Naive thymus-derived CD4-positive, alpha-beta T cell (primary cell): ENCODE measurements at regions of chr3 and their contacts with region 1.

Region 1: DNA sequence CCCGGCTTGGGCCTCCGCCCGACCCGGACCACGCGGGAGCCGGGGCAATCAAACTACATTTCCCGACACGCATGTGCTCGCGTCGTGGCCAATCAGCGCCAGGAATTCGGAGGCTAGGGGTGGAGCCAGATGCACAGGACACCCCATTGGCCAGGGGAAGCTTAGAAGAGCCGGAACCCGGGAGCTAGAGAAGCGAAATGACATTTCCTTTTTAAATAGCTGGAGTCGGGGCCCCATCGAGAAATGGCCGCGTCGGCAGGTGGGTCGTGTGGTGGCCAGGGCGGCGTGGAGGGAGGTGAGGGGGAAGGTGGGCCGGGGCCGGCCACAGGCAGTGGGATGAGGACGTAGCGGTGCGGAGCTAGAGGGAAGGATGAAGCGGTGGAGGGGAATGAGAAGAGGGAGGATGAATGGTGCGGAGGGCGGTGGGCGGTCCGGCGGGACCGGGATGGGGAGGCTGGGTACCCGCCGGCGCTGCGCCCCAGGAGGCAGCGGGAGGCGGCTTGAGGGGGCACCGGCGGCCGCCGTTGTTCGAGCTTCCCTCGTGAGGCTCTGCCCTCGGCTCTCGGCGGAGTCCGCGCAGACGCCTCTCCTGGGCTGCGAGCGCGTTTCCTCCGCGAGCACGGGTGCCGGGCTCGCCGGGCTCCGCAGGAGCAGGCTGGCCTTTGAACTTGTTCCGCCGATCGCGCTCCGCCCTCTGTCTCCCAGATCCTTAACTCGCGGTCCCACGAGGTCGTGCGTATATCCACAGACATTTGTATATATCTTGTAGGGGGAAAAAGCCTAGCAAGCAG is at the start of gene KBTBD8:
- DNase-seq: peak; percentile 87 to 99 (median 98)
- ATAC-seq: peak; percentile 97
- H3K4me3 ChIP-seq: peak within 1 kb of the TSS; percentile 69
- H3K4me3 Mint-ChIP-seq: peak within 1 kb of the TSS; percentile 85 to 99 (median 96)
- H3K27ac ChIP-seq: peak within 1 kb of the TSS; percentile 75
- H3K27ac Mint-ChIP-seq: peak within 1 kb of the TSS; percentile 68 to 96 (median 93)
- H3K4me1 ChIP-seq: peaks cover 7 to 19% of the 10 kb centered on the region in 2 donors
- H3K4me1 Mint-ChIP-seq: peaks cover 4 to 39% (median 27%) of the 10 kb centered on the region in 7 donors
- H3K27me3 ChIP-seq: no peaks in the 10 kb centered on the region
- H3K27me3 Mint-ChIP-seq: peaks cover 10 to 33% (median 27%) of the 10 kb centered on the region in 5 donors
- total RNA-seq, gene KBTBD8: 4.5 to 14.6 (median 9.5) TPM

Region 2: GRCh38 chr3:66220602-66221377 is 777.5 kb before region 1 on chr3 and contains the start of gene SLC25A26:
- CTCF ChIA-PET with region 1: no interaction called
- POLR2A ChIA-PET with region 1: interaction called, 3 read pairs
- intact Hi-C with region 1: loop called (anchors 1 kb)
- DNase-seq: peak; percentile 90 to 99 (median 97)
- ATAC-seq: peak; percentile 99
- H3K4me3 ChIP-seq: peak within 1 kb of the TSS; percentile 70
- H3K4me3 Mint-ChIP-seq: peak within 1 kb of the TSS; percentile 91 to 99 (median 96)
- H3K27ac ChIP-seq: peak within 1 kb of the TSS; percentile 90
- H3K27ac Mint-ChIP-seq: peak within 1 kb of the TSS; percentile 85 to 98 (median 95)
- H3K4me1 ChIP-seq: peaks cover 7% of the 10 kb centered on the region in 2 donors
- H3K4me1 Mint-ChIP-seq: peaks cover 15 to 55% (median 44%) of the 10 kb centered on the region in 7 donors
- H3K27me3 ChIP-seq: no peaks in the 10 kb centered on the region
- H3K27me3 Mint-ChIP-seq: peaks cover 0 to 2% (median 0%) of the 10 kb centered on the region in 5 donors
- total RNA-seq, gene SLC25A26: 14.1 to 25.5 (median 17.9) TPM

Region 3: DNA sequence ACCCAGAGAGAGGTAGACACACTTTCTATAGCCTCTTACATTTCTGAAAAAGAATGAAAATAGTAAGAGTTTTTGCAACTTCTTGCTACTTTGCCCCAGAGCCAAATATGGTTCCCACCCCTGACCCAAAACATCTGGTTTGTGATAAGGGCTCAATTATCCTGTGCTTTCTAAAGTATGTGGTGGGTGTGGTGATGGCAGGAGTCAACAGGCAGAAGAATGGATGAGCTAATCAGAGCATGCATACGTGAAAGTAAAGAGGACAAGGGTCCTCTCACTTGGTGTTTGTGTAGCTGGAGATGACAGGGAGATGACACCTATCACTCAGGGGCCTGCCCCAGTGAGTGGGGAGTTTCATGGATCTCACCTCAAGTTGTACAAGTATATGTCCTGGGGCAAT is 18.9 kb after region 1 on chr3:
- CTCF ChIA-PET with region 1: no interaction called
- POLR2A ChIA-PET with region 1: interaction called, 3 read pairs
- intact Hi-C with region 1: loop called in 1 of 2 experiments (anchors 1 kb)
- DNase-seq: no peak
- ATAC-seq: no peak
- H3K4me3 ChIP-seq: no peak overlapping the region
- H3K4me3 Mint-ChIP-seq: peak overlapping the region in 1 of 10 donors; percentile 25
- H3K27ac ChIP-seq: no peak overlapping the region
- H3K27ac Mint-ChIP-seq: peak overlapping the region in 4 of 9 donors; percentile 2 to 51 (median 34)
- H3K4me1 ChIP-seq: peaks cover 0 to 19% of the 10 kb centered on the region in 2 donors
- H3K4me1 Mint-ChIP-seq: peaks cover 13 to 27% (median 24%) of the 10 kb centered on the region in 7 donors
- H3K27me3 ChIP-seq: no peaks in the 10 kb centered on the region
- H3K27me3 Mint-ChIP-seq: no peaks in the 10 kb centered on the region

Region 4: DNA sequence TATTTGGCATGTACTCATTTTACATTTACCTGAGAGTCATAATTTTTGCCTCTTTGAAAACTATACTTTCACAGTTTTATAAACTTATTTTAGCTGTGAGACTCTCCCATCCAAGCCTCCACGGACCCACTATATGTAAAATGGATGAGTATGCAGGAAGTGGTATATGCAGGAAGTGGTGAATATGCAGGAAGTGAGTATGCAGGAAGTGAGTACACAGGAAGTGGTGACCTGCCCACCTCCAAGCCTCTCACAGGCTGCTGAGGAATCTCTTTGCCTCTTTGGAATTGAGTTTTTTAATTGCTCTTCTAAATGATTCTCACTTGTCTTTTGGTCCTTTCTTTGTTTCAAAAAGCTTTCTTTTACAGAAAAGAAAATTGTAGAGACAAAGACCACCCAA is 85.0 kb after region 1 on chr3:
- CTCF ChIA-PET with region 1: no interaction called
- POLR2A ChIA-PET with region 1: interaction called, 5 read pairs
- intact Hi-C with region 1: loop called (anchors 1 kb)
- DNase-seq: peak in 8 of 9 donors; percentile 37 to 75 (median 67)
- ATAC-seq: peak; percentile 87
- H3K4me3 ChIP-seq: peak overlapping the region; percentile 56
- H3K4me3 Mint-ChIP-seq: peak overlapping the region; percentile 54 to 91 (median 71)
- H3K27ac ChIP-seq: peak overlapping the region; percentile 61
- H3K27ac Mint-ChIP-seq: peak overlapping the region; percentile 73 to 96 (median 88)
- H3K4me1 ChIP-seq: peaks cover 19 to 22% of the 10 kb centered on the region in 2 donors
- H3K4me1 Mint-ChIP-seq: peaks cover 16 to 46% (median 27%) of the 10 kb centered on the region in 7 donors
- H3K27me3 ChIP-seq: no peaks in the 10 kb centered on the region
- H3K27me3 Mint-ChIP-seq: peaks cover 0 to 12% (median 6%) of the 10 kb centered on the region in 5 donors

Region 5: DNA sequence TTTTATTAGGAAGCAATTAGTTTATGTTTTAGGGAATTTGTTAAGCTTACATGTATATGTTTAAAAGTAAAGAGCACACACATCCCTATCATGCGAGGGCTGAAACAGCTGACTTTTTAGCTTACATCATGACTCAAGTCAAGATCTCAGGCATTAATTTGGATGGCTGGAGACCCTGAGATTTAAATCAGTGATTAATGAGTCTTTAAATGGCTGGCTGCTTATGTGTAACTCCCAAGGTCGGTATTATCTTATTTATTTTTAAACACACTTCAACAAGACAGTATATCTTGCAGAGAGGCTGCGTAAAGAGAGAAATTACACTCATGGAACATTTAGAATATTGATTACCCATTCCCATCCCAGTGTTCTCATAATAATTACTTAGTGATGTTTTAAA is 169.2 kb after region 1 on chr3:
- CTCF ChIA-PET with region 1: no interaction called
- POLR2A ChIA-PET with region 1: no interaction called
- intact Hi-C with region 1: no loop called
- DNase-seq: no peak
- ATAC-seq: no peak
- H3K4me3 ChIP-seq: no peak overlapping the region
- H3K4me3 Mint-ChIP-seq: no peak overlapping the region
- H3K27ac ChIP-seq: no peak overlapping the region
- H3K27ac Mint-ChIP-seq: no peak overlapping the region
- H3K4me1 ChIP-seq: no peaks in the 10 kb centered on the region
- H3K4me1 Mint-ChIP-seq: no peaks in the 10 kb centered on the region
- H3K27me3 ChIP-seq: no peaks in the 10 kb centered on the region
- H3K27me3 Mint-ChIP-seq: peaks cover 0 to 10% (median 3%) of the 10 kb centered on the region in 5 donors

Region 6: DNA sequence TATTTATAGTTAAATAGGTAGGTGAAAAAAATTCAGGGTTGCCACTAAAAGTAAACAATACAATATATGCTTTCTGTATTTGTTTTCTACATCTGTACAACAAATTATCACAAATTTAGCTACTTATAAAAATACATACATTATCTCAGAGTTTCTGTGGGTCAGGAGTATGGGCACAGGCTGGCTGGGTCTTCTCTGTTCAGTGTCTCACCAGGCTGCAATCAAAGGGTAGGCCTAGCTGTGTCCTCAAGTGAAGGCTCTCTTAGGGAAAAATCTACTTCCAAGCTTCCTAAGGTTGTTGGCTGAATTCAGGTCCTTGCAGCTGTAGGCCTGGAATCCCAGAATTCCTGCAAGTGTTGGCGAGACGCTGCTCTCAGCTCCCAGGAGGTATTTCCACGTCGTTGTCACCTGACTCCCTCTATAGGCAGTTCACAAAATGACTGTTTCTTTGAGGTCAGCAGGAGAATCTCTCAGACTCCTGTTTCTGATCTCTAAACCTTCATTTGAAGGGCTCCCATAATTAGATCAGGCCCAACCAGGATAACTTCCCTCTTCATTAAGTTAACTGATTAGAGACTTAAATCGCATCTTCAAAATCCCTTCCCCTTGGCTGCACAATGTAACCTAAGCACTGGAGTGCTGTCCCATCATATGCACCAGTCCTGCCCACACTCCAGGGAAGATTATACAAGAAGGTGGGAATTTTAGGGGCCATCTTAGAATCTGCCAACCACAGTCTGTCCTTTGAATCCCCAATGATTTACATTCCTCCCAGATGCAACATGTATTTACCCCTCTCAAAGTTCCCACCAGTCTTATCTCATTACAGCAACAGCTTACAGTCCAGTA is 359.5 kb after region 1 on chr3:
- CTCF ChIA-PET with region 1: no interaction called
- POLR2A ChIA-PET with region 1: no interaction called
- intact Hi-C with region 1: loop called in 1 of 2 experiments (anchors 10 kb)
- DNase-seq: no peak
- ATAC-seq: no peak
- H3K4me3 ChIP-seq: no peak overlapping the region
- H3K4me3 Mint-ChIP-seq: peak overlapping the region in 3 of 10 donors; percentile 36 to 49 (median 42)
- H3K27ac ChIP-seq: no peak overlapping the region
- H3K27ac Mint-ChIP-seq: no peak overlapping the region
- H3K4me1 ChIP-seq: peaks cover 0 to 3% of the 10 kb centered on the region in 2 donors
- H3K4me1 Mint-ChIP-seq: peaks cover 0 to 29% (median 6%) of the 10 kb centered on the region in 7 donors
- H3K27me3 ChIP-seq: no peaks in the 10 kb centered on the region
- H3K27me3 Mint-ChIP-seq: no peaks in the 10 kb centered on the region

Region 7: DNA sequence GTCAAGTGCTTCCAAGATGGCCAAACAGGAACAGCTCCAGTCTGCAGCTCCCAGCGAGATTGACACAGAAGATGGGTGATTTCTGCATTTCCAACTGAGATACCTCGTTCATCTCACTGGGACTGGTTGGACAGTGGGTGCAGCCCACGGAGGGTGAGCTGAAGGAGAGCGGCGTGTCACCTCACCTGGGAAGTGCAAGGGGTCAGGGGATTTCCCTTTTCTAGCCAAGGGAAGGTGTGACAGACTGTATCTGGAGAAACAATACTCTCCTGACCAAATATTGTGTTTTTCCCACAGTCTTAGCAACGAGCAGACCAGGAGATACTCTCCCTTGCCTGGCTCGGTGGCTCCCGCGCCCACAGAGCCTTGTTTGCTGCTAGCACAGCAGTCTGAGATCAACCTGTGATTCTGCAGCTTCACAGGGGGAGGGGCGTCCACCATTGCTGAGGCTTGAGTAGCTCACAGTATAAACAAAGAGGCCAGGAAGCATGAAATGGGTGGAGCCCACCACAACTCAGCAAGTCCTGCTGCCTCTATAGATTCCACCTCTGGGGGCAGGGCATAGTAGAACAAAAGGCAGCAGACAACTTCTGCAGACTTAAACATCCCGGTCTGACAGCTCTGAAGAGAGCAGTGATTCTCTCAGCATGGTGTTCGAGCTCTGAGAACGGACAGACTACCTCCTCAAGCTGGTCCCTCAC is 949.6 kb after region 1 on chr3:
- CTCF ChIA-PET with region 1: no interaction called
- POLR2A ChIA-PET with region 1: no interaction called
- intact Hi-C with region 1: loop called in 1 of 2 experiments (anchors 5 kb)
- DNase-seq: peak in 8 of 9 donors; percentile 25 to 92 (median 84)
- ATAC-seq: peak; percentile 97
- H3K4me3 ChIP-seq: peak overlapping the region; percentile 40
- H3K4me3 Mint-ChIP-seq: peak overlapping the region; percentile 76 to 92 (median 83)
- H3K27ac ChIP-seq: peak overlapping the region; percentile 38
- H3K27ac Mint-ChIP-seq: peak overlapping the region; percentile 76 to 97 (median 91)
- H3K4me1 ChIP-seq: peaks cover 6 to 26% of the 10 kb centered on the region in 2 donors
- H3K4me1 Mint-ChIP-seq: peaks cover 11 to 54% (median 39%) of the 10 kb centered on the region in 7 donors
- H3K27me3 ChIP-seq: no peaks in the 10 kb centered on the region
- H3K27me3 Mint-ChIP-seq: no peaks in the 10 kb centered on the region